PC-9 (cell line): ENCODE measurements at regions of chr2 and their contacts with region 1.

Region 1: GRCh38 chr2:190088917-190089316 is 26.4 kb upstream of the MSTN start:
- DNase-seq: peak; percentile 2 to 37
- H3K4me3 ChIP-seq: no peak overlapping the region
- H3K27ac ChIP-seq: no peak overlapping the region
- H3K4me1 ChIP-seq: no peaks in the 10 kb centered on the region
- H3K27me3 ChIP-seq: no peaks in the 10 kb centered on the region
- CTCF ChIP-seq: peak; percentile 77

Region 2: DNA sequence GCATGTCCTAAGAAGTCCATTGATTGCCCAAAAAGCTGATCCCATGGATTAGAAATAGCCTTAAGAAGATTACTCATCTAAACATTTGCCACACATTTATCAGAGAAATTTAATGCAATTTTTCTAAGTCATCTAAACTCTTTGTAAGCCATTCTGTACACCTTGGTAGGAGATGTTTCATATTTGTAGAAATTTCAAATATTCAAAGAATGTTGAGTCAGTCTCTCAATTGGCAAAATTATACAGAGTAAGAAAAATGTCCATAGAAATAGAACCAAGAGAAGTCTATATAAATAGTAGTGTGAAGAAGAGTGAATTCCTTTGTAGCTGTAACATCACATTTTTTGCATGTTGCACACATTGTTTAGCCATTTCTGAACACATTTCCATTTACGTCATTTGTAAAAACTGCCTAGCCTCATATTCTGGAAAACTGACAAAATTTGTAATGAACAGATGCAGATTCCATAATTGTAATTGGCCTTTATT is 155.0 kb before region 1 on chr2:
- CTCF ChIA-PET with region 1: no interaction called
- POLR2A ChIA-PET with region 1: no interaction called
- intact Hi-C with region 1: no loop called
- DNase-seq: peak in 1 of 2 experiments; percentile 64
- H3K4me3 ChIP-seq: no peak overlapping the region
- H3K27ac ChIP-seq: peak overlapping the region; percentile 40; the same call in 1 of the 2 replicates
- H3K4me1 ChIP-seq: 0 out of 2 replicates have a peak, but pooled peaks cover 4% of the 10 kb centered on the region
- H3K27me3 ChIP-seq: no peaks in the 10 kb centered on the region
- CTCF ChIP-seq: no peak

Region 3: GRCh38 chr2:190311893-190312634 is 223.1 kb after region 1 on chr2:
- CTCF ChIA-PET with region 1: no interaction called
- POLR2A ChIA-PET with region 1: interaction called, 20 read pairs
- intact Hi-C with region 1: loop called (anchors 5 kb)
- DNase-seq: no peak
- H3K4me3 ChIP-seq: no peak overlapping the region
- H3K27ac ChIP-seq: no peak overlapping the region
- H3K4me1 ChIP-seq: no peaks in the 10 kb centered on the region
- H3K27me3 ChIP-seq: no peaks in the 10 kb centered on the region
- CTCF ChIP-seq: no peak

Region 4: DNA sequence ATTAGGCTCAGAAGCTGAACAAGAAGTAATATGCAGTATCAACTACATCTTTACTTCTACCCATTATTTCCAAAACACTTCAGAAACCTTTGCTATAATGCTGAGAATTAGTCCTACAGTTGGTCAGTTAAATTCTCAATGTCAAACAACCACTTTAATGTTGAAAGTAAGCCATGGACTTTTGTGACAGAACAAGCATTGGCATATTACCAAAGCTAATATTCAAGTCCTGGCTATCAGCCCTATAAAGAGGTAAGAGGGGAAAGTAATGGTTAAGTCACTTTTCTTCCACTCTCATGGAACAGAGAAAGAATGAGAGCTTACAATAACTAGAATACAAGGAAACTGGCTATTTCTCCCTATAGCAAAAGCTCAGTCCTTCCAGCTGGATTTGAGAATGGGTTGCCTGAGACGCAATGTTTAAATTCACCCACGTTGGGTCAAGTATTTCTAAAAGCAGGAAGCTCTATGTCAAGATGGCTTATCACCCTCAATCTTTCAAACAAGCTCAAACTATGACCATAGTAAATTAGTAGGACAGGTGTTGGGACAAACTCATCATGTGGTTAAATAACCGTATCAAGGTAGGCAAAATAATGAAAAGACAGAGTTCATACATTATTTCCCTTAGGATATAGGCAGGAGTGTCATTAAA is 287.8 kb after region 1 on chr2:
- CTCF ChIA-PET with region 1: no interaction called
- POLR2A ChIA-PET with region 1: no interaction called
- intact Hi-C with region 1: loop called (anchors 2 kb)
- DNase-seq: no peak
- H3K4me3 ChIP-seq: no peak overlapping the region
- H3K27ac ChIP-seq: no peak overlapping the region
- H3K4me1 ChIP-seq: no peaks in the 10 kb centered on the region
- H3K27me3 ChIP-seq: no peaks in the 10 kb centered on the region
- CTCF ChIP-seq: no peak

Region 5: DNA sequence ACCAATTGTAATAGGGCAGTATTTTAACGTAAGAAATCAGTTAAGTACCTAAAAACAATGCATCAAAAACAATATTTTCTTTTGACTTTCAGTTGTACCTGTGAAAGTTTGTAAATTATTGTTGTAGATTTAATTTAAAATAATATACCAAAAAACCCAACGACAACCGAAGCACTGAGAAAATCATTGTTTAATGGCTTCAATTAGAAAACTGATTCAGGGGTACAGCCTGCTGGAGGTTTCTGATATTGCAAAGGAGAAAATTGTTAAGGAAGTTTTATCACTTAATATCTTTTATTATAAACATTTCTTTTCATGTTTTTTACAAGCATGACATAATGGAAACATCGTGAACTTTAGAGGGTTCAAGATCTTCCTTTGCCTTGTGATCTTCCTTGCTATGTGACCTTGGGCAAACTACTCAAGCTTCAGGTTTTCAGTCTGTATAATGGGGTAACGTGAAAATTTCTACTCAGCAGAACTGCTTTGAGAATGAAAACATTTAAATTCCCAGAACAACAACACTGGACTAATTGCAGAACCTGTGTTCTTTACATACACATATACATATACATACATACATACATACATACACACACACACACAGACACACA is 715.4 kb after region 1 on chr2:
- CTCF ChIA-PET with region 1: no interaction called
- POLR2A ChIA-PET with region 1: no interaction called
- intact Hi-C with region 1: loop called (anchors 10 kb)
- DNase-seq: no peak
- H3K4me3 ChIP-seq: no peak overlapping the region
- H3K27ac ChIP-seq: no peak overlapping the region
- H3K4me1 ChIP-seq: no peaks in the 10 kb centered on the region
- H3K27me3 ChIP-seq: no peaks in the 10 kb centered on the region
- CTCF ChIP-seq: peak; percentile 71